Activated CD4-positive, alpha-beta memory T cell treated with anti-CD3 and anti-CD28 coated beads for 36 hours (primary cell): ENCODE measurements at regions of chr3 and their contacts with region 1.

Region 1: DNA sequence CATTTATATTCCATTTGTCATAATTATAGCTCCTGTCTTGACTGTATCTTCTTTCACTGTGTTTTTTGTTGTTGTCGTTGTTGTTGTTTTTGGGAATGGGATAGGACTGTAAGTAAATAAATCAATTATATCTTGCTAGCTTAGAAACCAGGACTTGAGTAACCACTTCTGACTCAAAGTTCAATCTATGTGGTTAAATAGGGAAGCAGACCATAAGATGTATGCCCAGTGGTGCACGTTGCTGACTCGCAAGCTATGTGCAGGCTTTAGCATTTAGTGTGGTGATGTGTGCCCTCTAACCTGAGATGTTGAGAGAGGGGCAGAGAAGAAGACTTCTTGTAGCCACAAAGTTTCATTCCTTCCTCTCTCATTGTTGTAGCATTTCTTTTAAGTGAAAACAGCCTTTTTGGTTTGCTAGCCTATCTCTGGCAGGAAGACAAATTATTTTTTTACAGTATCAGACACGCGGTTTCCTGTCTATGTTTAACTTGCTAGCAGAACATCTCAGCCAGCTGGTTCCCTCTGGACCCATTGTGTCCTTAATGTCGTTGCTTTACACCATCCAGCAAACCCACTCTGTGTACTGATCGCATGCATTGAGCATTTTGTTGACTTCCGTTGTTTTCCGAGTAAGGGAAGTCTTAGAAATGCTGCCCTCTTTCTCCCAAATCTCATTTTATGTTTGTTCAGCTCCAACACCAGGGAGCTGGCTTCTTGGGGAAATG is 52.1 kb downstream of the TGFBR2 start:
- DNase-seq: peak; percentile 72
- H3K4me3 Mint-ChIP-seq: peak overlapping the region; percentile 68
- H3K27ac Mint-ChIP-seq: peak overlapping the region; percentile 85
- H3K4me1 Mint-ChIP-seq: peaks cover 98% of the 10 kb centered on the region
- H3K27me3 Mint-ChIP-seq: no peaks in the 10 kb centered on the region

Region 2: DNA sequence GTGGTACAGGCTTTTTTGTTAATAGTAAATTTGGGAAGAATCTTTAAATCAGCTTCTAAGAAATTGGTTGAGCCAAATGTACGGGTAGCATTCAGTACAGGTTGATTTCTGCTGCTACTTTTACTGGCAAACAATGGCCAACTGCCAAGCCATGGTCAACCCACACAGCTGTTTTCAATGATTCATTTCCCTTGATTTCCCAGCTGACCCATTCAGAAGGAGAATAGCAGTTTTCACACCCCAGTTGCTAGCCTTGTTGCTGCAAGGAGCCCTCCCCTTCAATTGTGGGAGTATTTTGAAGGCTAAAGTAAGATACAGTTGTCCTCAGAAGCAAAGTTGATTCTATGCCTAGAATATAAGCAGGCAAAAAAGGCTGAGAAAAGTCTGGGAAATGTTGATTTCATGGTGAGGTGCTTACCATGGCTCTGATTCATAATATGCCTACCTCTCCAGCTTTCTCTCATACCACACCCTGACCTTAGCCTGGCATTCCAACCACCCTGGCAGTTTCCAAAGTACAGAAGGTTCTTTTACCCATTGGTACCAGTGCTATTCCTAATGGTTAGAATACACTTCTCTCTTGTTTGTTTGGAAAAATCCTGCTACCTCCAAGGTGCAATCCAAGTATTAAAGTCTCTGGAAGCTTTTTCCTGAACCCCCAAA is 372.4 kb before region 1 on chr3:
- CTCF ChIA-PET with region 1: no interaction called
- POLR2A ChIA-PET with region 1: no interaction called
- intact Hi-C with region 1: no loop called
- DNase-seq: peak; percentile 66
- H3K4me3 Mint-ChIP-seq: no peak overlapping the region
- H3K27ac Mint-ChIP-seq: no peak overlapping the region
- H3K4me1 Mint-ChIP-seq: peaks cover 32% of the 10 kb centered on the region
- H3K27me3 Mint-ChIP-seq: no peaks in the 10 kb centered on the region

Region 3: DNA sequence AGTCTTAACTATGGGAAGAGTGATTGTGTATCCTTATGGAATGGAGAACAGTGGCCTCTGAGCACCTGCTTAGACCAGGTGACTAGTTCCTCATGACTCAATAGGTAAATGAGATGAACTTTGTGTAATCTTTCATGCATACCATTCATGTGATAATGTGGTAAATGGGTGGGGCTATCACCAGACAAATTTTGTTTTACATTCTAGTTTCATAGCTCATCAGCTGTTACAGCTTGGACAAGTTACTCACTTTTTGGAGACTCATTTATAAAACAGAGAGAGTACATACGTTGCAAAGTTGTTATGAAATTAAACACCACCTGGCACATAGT is 155.8 kb before region 1 on chr3:
- CTCF ChIA-PET with region 1: interaction called, 4 read pairs
- POLR2A ChIA-PET with region 1: interaction called, 4 read pairs
- intact Hi-C with region 1: loop called (anchors 1 kb)
- DNase-seq: no peak
- H3K4me3 Mint-ChIP-seq: no peak overlapping the region
- H3K27ac Mint-ChIP-seq: peak overlapping the region; percentile 70
- H3K4me1 Mint-ChIP-seq: peaks cover 46% of the 10 kb centered on the region
- H3K27me3 Mint-ChIP-seq: no peaks in the 10 kb centered on the region

Region 4: DNA sequence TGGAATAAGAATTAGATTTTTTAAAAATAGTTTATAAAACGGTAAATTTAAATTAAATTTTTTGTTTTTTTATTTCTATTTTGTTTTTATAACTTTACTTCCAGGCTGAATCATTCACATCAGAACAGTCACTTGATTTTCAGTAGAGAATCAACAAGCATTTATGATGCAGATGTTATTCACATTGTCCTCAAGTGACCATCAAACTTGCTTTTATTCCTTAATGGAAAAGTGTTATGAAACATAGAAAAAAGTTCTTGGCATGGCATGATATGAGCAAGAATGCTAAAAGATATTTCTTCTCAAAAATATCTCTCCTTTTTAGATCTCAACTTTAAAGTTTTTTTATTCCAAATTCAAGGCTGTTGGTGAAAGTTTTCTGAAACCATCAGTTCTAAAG is 123.0 kb before region 1 on chr3:
- CTCF ChIA-PET with region 1: no interaction called
- POLR2A ChIA-PET with region 1: no interaction called
- intact Hi-C with region 1: no loop called
- DNase-seq: no peak
- H3K4me3 Mint-ChIP-seq: no peak overlapping the region
- H3K27ac Mint-ChIP-seq: no peak overlapping the region
- H3K4me1 Mint-ChIP-seq: no peaks in the 10 kb centered on the region
- H3K27me3 Mint-ChIP-seq: no peaks in the 10 kb centered on the region

Region 5: DNA sequence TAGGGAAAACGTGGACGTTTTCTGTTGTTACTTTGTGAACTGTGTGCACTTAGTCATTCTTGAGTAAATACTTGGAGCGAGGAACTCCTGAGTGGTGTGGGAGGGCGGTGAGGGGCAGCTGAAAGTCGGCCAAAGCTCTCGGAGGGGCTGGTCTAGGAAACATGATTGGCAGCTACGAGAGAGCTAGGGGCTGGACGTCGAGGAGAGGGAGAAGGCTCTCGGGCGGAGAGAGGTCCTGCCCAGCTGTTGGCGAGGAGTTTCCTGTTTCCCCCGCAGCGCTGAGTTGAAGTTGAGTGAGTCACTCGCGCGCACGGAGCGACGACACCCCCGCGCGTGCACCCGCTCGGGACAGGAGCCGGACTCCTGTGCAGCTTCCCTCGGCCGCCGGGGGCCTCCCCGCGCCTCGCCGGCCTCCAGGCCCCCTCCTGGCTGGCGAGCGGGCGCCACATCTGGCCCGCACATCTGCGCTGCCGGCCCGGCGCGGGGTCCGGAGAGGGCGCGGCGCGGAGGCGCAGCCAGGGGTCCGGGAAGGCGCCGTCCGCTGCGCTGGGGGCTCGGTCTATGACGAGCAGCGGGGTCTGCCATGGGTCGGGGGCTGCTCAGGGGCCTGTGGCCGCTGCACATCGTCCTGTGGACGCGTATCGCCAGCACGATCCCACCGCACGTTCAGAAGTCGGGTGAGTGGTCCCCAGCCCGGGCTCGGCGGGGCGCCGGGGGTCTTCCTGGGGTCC is 52.0 kb before region 1 on chr3 and contains the start of gene TGFBR2:
- CTCF ChIA-PET with region 1: interaction called, 13 read pairs
- POLR2A ChIA-PET with region 1: interaction called, 140 read pairs
- intact Hi-C with region 1: loop called (anchors 1 kb)
- DNase-seq: peak; percentile 92
- H3K4me3 Mint-ChIP-seq: peak within 1 kb of the TSS; percentile 87
- H3K27ac Mint-ChIP-seq: peak within 1 kb of the TSS; percentile 96
- H3K4me1 Mint-ChIP-seq: peaks cover 53% of the 10 kb centered on the region
- H3K27me3 Mint-ChIP-seq: no peaks in the 10 kb centered on the region
- total RNA-seq, gene TGFBR2: 36.8 to 37.0 TPM

Region 6: GRCh38 chr3:30623351-30623750 is 35.1 kb before region 1 on chr3:
- CTCF ChIA-PET with region 1: interaction called, 9 read pairs
- POLR2A ChIA-PET with region 1: interaction called, 19 read pairs
- intact Hi-C with region 1: loop called (anchors 1 kb)
- DNase-seq: no peak
- H3K4me3 Mint-ChIP-seq: peak overlapping the region; percentile 59
- H3K27ac Mint-ChIP-seq: peak overlapping the region; percentile 96
- H3K4me1 Mint-ChIP-seq: peaks cover 91% of the 10 kb centered on the region
- H3K27me3 Mint-ChIP-seq: no peaks in the 10 kb centered on the region

Region 7: DNA sequence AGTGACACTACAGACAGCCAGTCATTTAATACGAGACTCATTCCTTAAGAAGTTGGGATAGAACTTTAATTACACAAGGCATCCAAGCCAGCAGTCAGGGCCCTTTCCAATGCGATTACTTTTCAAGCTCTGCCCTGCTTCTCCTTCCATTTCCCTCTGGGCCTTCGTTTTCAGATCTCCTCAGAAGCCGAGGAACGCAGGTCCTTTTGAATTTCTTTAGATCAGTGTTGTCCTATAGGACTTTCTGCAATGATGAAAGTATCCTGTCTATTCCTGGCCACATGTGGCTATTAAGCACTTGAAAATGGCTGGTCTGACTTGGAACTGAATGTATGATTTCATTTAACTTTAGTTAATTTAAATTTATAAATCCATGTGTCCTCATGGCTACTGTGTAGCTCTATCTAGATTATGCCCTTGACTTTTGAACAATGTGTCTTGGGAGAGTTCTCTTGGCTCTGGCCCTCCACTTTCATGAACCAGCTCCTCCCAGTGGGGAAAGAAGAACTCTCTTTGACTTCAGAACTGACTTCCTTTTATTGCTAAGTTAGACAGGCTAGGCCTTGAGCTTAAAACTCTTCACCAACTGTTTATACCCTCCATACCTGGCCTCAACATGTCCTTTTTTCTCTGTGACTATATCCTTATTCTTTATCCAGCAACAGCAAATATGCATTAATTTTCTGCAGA is 29.4 kb before region 1 on chr3:
- CTCF ChIA-PET with region 1: interaction called, 9 read pairs
- POLR2A ChIA-PET with region 1: interaction called, 200 read pairs
- intact Hi-C with region 1: loop called (anchors 1 kb)
- DNase-seq: no peak
- H3K4me3 Mint-ChIP-seq: peak overlapping the region; percentile 45
- H3K27ac Mint-ChIP-seq: peak overlapping the region; percentile 91
- H3K4me1 Mint-ChIP-seq: peaks cover 90% of the 10 kb centered on the region
- H3K27me3 Mint-ChIP-seq: no peaks in the 10 kb centered on the region

Region 8: DNA sequence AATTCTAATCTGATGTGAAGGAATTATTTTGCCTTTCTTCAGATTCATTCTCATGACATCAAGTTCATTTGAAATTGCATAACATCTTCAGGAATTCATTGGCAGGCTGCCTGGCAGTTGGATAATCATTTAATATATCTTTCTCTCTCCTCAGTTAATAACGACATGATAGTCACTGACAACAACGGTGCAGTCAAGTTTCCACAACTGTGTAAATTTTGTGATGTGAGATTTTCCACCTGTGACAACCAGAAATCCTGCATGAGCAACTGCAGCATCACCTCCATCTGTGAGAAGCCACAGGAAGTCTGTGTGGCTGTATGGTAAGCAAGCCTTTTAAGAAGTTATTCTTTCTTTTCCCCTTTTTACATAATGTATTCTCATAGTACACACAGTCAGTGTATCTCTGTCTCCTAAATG is 13.9 kb before region 1 on chr3:
- CTCF ChIA-PET with region 1: interaction called, 18 read pairs
- POLR2A ChIA-PET with region 1: interaction called, 200 read pairs
- intact Hi-C with region 1: loop called (anchors 1 kb)
- DNase-seq: peak; percentile 75
- H3K4me3 Mint-ChIP-seq: peak overlapping the region; percentile 50
- H3K27ac Mint-ChIP-seq: peak overlapping the region; percentile 94
- H3K4me1 Mint-ChIP-seq: peaks cover 92% of the 10 kb centered on the region
- H3K27me3 Mint-ChIP-seq: no peaks in the 10 kb centered on the region

Region 9: GRCh38 chr3:30977592-30977991 is 319.1 kb after region 1 on chr3:
- CTCF ChIA-PET with region 1: no interaction called
- POLR2A ChIA-PET with region 1: no interaction called
- intact Hi-C with region 1: no loop called
- DNase-seq: no peak
- H3K4me3 Mint-ChIP-seq: no peak overlapping the region
- H3K27ac Mint-ChIP-seq: no peak overlapping the region
- H3K4me1 Mint-ChIP-seq: no peaks in the 10 kb centered on the region
- H3K27me3 Mint-ChIP-seq: no peaks in the 10 kb centered on the region

Region 10: DNA sequence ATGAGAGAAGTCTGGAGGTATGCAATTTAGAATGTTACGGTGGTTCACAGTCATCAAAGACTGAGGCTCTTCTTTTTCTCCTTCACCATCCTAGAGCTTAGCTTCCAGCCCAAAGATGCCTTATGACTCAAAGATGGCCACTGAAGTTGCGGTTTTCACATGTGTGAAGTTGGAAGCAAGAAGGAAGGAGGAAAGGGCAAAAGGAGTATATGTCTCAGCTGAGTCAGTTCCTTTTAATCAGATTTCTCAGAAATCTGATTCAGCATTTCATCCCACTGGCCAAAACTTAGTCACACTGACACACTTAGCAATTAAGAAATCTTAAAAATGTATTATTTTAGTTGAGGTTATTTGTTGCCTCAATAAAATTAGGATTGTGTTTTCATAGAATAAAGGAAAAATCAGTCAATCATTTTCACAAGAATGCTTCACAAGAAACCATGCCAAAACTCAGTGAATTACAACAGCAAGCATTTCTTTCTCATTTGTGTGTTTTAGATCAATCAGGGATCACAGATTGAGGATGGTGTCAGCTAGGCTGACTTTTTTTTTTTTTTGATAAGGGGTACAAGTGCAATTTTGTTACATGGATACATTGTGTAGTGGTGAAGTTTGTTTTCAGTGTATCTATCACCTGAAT is 447.1 kb after region 1 on chr3:
- CTCF ChIA-PET with region 1: no interaction called
- POLR2A ChIA-PET with region 1: no interaction called
- intact Hi-C with region 1: loop called (anchors 10 kb)
- DNase-seq: peak; percentile 51
- H3K4me3 Mint-ChIP-seq: no peak overlapping the region
- H3K27ac Mint-ChIP-seq: no peak overlapping the region
- H3K4me1 Mint-ChIP-seq: peaks cover 37% of the 10 kb centered on the region
- H3K27me3 Mint-ChIP-seq: no peaks in the 10 kb centered on the region